ENCODE measurements at regions of chr14 and their contacts with region 1.

Region 1: GRCh38 chr14:77320238-77320935 is at the start of gene POMT2:
- DNase-seq: peak; percentile 91 to 93
- ATAC-seq: peak; percentile 81 to 83
- H3K4me3 ChIP-seq: peak within 1 kb of the TSS; percentile 99
- H3K27ac ChIP-seq: peak within 1 kb of the TSS; percentile 99
- H3K4me1 ChIP-seq: peaks cover 34% of the 10 kb centered on the region
- CTCF ChIP-seq: peak; percentile 30; the same call in 2 of the 3 replicates
- EP300 ChIP-seq: no peak
- POLR2A ChIP-seq: peak; percentile 68
- RAD21 ChIP-seq: no peak
- polyA plus RNA-seq, gene POMT2: 35.0 and 38.7 TPM in 2 replicates

Region 2: DNA sequence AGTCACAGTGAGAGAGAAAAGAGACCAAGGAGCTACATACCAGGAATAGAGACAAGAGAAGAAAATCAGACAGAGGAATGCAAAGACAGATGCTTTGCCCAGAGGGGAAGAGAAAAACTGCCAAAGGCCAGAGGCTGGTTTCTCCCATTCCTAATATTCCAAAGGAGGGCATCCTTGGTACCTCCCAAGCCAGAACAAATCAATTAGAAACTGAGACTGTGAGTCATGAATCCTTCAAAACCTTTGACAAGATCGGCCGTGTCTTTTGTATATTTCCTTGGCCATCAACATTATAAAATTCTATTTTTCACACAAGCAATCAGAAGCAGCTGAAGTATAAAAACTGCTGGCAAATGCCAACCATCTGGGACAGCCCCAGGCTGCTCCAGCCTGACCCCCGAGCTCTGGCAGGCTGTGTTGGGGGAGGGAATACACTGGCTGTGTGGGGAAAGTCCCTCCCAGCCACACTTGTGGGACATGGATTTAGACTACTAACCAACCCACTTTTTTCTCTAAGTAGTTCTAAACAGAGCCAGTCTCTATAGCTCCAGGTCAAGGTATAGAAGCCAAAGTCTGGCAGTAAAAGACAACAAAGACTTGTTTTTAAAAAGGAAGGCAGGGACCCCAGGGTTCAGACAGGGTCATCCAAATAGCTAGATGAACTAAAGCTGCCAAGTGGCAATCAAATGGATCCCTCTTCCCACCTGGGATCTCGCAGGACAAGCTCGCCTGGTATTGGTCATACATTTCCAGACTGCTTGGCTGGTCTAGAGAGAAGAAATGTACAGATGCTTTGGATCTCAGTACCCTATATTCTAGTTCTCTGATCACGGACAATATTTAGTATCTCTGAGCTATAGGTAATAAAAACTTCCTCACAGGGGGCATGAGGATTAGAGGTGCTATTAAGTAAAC is 13.3 kb before region 1 on chr14:
- CTCF ChIA-PET with region 1: interaction called, 622 read pairs
- POLR2A ChIA-PET with region 1: interaction called, 45 read pairs
- DNase-seq: no peak
- ATAC-seq: no peak
- H3K4me3 ChIP-seq: no peak overlapping the region
- H3K27ac ChIP-seq: peak overlapping the region; percentile 78
- H3K4me1 ChIP-seq: peaks cover 63% of the 10 kb centered on the region
- CTCF ChIP-seq: no peak
- EP300 ChIP-seq: no peak
- POLR2A ChIP-seq: no peak
- RAD21 ChIP-seq: no peak

Region 3: DNA sequence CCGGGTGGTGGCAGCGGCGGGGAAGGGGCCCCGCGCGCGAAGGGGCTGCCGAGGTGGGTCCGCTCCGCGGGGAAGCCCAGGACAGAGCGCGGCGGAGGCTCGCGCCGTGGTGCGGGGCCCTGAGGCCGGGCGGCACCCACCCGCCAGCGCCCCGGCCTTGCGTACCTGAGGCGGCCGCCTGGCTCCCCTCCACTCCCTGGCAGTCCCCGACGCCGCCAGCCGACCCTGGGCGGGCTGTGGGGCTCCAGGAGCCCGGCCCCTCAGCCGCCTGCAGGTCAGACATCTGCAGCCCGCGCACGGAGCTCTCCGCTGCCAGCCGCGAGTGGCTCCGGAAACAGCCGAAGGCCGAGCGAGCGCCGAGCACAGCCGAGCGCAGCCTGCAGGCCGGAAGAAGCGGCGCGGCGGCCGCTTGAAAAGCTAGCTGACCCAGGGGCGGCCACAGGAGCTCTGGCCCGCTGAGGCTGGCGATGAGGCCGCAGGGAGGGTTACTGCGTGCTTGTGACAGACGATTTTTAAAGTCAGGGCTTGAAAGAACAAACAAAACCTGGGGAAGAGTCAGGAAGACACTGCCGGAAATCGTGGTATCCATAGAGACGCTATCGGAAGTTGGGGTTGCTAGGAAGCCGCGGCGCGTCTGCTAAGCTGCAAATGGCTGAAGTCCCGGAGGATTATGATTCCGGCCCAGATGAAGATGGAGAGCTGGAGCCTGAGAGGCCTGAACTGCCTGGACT is 56.5 kb after region 1 on chr14 and contains the starts of genes SAMD15 and TMED8:
- CTCF ChIA-PET with region 1: interaction called, 8 read pairs
- POLR2A ChIA-PET with region 1: interaction called, 24 read pairs
- DNase-seq: peak; percentile 84 to 89
- ATAC-seq: peak; percentile 98 to 99
- H3K4me3 ChIP-seq: peak within 1 kb of the TSS; percentile 91
- H3K27ac ChIP-seq: peak within 1 kb of the TSS; percentile 91 to 92
- H3K4me1 ChIP-seq: peaks cover 13% of the 10 kb centered on the region; the same call in 2 of the 3 replicates
- CTCF ChIP-seq: no peak
- EP300 ChIP-seq: no peak
- POLR2A ChIP-seq: peak; percentile 29
- RAD21 ChIP-seq: no peak
- polyA plus RNA-seq, gene SAMD15: 2.0 and 2.7 TPM in 2 replicates
- polyA plus RNA-seq, gene TMED8: 11.7 and 13.9 TPM in 2 replicates

Measured in A549 (cell line).